ENCODE measurements at regions of chr2 and their contacts with region 1.

Region 1: DNA sequence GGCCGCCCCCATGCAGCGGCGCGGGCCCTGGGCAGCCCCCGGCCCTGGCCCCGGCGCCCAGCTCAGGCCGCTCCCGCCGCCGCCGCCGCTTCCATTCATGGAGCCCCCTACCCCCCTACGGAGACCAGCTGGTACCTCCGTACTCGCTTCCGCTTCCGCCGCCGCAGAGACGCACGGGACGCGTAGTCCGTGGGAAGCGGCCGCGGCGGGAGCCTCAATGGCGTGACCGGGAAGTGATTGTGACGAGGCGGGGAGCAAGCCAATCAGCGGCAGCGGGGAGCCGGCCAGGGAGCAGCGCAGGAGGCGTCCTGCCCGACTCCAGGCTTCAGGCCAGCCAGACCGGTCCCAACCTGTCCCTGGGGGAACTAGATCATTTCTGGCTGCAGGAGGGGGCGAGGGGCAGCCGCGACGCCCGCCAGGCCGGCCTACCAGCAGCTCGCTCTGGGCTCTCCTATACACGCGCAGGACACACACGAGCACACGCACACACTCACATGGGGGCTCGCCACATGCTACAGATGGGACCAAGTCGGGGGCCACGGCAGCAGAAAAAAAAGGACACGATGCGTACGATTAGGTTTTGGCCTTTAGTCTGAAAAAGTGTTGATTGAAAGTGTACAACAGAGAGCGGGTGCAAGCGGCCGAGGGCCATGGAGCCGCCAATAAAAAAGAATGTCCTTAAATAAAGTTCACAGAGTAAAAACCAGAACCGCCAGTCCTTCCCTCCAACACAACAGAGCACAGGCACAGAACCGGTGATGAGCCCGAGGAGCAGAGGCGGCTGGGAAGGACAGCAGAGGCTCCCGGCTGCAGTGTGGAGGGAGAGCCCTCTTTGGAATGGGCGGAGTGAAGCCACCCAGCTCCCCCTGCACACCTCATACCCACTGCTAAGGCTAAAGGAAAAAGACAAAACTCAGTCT is at the start of gene ZNF513:
- DNase-seq: peak; percentile 96 to 97
- ATAC-seq: peak; percentile 95
- H3K4me3 ChIP-seq: peak within 1 kb of the TSS; percentile 59 to 77 (median 70)
- H3K27ac ChIP-seq: peak within 1 kb of the TSS; percentile 84 to 91 (median 88)
- H3K4me1 ChIP-seq: peaks cover 18 to 19% of the 10 kb centered on the region in 2 donors
- H3K27me3 ChIP-seq: no peaks in the 10 kb centered on the region
- CTCF ChIP-seq: no peak
- POLR2A ChIP-seq: peak; percentile 63 to 68
- total RNA-seq, gene ZNF513: 2.0 to 7.6 (median 4.5) TPM

Region 2: GRCh38 chr2:27428213-27428977 is 47.5 kb after region 1 on chr2 and contains the start of gene NRBP1:
- in situ Hi-C with region 1: no loop called
- intact Hi-C with region 1: loop called (anchors 2 kb)
- DNase-seq: peak; percentile 87 to 89
- ATAC-seq: peak; percentile 88 to 89
- H3K4me3 ChIP-seq: peak within 1 kb of the TSS; percentile 81 to 100 (median 98)
- H3K27ac ChIP-seq: peak within 1 kb of the TSS; percentile 93 to 100 (median 100)
- H3K4me1 ChIP-seq: peaks cover 34 to 43% of the 10 kb centered on the region in 2 donors
- H3K27me3 ChIP-seq: no peaks in the 10 kb centered on the region
- CTCF ChIP-seq: no peak
- POLR2A ChIP-seq: peak; percentile 94 to 97
- total RNA-seq, gene NRBP1: 91.8 to 125 (median 120) TPM